Testis (tissue), 5 donors: ENCODE measurements at regions of chr4 and their contacts with region 1.

Region 1: DNA sequence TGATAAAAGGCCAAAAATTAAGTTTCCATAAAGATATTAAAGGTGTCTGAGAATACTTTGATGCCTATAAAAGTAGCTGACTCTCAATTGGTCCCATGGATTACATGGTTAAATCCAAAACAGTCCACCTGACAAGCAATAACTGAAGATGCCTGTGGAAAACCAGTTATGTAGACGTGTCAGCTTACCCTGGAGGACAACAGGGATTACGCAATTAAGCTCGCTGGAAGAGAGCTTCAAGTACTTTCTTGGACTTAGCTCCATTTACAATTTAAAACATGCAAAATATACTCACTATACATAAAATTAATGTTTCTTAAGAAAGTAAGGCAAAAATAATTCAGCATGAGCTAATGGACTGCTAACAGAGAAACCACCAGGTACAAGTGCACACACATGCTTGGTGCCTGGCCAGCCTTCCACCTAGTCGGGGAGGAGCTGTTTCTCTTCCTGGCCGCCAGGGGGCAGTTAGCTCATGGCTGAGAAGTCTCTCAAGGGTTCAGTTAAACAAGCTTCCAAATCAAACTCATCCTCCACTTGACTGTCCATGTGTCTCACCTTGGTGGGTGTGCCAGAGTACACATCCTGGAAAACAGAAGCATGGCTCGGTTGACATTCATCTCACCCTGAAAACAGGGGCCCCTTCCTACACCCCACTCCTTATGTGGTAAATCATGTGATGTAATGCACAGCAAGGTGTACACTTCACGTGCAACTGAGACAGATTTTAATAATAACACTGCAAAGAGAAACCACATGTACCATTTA is 9.2 kb upstream of the FAM53A start:
- DNase-seq: peak; percentile 58
- H3K4me3 ChIP-seq: no peak overlapping the region
- H3K27ac ChIP-seq: no peak overlapping the region
- H3K4me1 ChIP-seq: no peaks in the 10 kb centered on the region
- H3K27me3 ChIP-seq: no peaks in the 10 kb centered on the region
- CTCF ChIP-seq: peak; percentile 69 to 86 (median 77)
- POLR2A ChIP-seq: no peak

Region 2: DNA sequence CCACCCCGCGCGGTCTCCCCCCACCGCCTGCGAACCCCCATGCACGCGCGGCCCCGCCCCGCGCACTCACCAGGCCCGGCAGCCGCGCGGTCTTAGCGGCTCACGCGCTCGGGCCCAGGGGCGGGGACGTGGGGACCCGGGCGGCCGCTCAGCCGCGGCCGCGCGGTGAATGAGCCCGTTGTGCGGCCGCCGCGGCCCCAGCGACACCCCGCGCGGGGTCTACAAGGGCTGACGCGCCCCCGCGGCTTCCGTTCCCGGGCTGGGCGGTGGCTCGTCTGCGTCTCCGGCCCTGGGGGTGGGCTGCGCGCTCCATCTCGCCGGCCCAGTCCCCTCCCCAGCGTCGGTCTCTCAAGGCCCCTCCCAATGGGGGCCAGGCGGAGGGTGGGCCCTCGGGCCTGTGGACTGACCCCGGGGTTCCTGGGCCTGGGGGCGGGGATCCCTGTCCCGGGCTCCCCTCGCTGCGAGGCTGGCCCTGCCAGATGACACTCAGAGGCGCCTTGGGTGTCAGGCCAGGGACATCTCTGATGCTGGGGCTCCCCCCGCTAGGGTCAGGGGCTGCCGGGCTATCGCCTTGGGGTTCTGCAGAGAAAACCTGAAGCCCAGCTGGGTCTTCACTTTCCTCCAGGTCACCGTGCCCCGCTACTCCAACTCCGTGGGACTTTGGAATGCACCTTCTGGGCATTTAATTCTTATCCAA is 695.8 kb before region 1 on chr4:
- intact Hi-C with region 1: no loop called
- DNase-seq: no peak
- H3K4me3 ChIP-seq: peak overlapping the region; percentile 26 to 32
- H3K27ac ChIP-seq: no peak overlapping the region
- H3K4me1 ChIP-seq: peaks cover 7% of the 10 kb centered on the region
- H3K27me3 ChIP-seq: no peaks in the 10 kb centered on the region
- CTCF ChIP-seq: no peak
- POLR2A ChIP-seq: no peak

Region 3: DNA sequence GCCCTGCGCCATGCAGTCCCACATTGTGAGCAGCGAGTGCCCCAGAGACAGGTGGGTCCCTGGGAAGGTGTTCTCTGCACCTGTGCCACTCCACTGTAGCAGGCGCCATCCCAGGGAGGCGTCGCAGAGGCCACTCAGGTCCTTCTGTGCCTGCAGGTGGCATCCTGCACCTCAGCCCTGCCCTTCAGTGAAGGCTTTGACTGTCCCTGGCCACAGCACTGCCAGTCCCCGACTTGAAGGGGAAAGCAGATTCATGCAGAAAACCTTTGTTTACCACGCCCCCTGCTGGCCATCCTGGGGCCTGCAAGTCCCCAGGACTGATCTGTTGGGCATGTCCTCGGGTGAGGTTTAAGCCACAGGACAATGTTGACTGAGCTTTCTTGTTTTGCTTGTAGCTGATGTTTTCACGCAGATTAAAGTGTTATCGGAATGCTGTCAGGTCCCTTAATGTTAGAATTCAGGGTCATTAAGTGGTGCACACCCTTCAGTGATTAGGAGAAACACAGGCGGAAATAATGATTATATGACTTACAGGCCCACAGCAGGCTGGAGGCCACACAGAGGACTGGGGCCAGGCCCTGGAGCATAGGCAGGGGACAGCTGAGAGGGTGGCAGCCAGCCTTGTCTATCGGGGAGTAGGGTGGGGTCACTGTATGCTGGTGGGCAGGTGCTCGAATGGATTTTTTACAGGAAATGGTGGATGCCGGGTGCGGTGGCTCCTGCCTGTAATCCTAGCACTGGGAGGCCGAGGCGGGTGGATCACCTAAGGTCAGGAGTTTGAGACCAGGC is 33.0 kb after region 1 on chr4:
- intact Hi-C with region 1: loop called (anchors 5 kb)
- DNase-seq: peak; percentile 96
- H3K4me3 ChIP-seq: no peak overlapping the region
- H3K27ac ChIP-seq: no peak overlapping the region
- H3K4me1 ChIP-seq: peaks cover 8% of the 10 kb centered on the region
- H3K27me3 ChIP-seq: no peaks in the 10 kb centered on the region
- CTCF ChIP-seq: peak; percentile 89 to 97 (median 91)
- POLR2A ChIP-seq: no peak

Region 4: GRCh38 chr4:1928356-1929239 is 235.3 kb after region 1 on chr4:
- intact Hi-C with region 1: no loop called
- DNase-seq: no peak
- H3K4me3 ChIP-seq: no peak overlapping the region
- H3K27ac ChIP-seq: no peak overlapping the region
- H3K4me1 ChIP-seq: no peaks in the 10 kb centered on the region
- H3K27me3 ChIP-seq: no peaks in the 10 kb centered on the region
- CTCF ChIP-seq: no peak
- POLR2A ChIP-seq: no peak